ENCODE measurements at regions of chr20 and their contacts with region 1.

Region 1: DNA sequence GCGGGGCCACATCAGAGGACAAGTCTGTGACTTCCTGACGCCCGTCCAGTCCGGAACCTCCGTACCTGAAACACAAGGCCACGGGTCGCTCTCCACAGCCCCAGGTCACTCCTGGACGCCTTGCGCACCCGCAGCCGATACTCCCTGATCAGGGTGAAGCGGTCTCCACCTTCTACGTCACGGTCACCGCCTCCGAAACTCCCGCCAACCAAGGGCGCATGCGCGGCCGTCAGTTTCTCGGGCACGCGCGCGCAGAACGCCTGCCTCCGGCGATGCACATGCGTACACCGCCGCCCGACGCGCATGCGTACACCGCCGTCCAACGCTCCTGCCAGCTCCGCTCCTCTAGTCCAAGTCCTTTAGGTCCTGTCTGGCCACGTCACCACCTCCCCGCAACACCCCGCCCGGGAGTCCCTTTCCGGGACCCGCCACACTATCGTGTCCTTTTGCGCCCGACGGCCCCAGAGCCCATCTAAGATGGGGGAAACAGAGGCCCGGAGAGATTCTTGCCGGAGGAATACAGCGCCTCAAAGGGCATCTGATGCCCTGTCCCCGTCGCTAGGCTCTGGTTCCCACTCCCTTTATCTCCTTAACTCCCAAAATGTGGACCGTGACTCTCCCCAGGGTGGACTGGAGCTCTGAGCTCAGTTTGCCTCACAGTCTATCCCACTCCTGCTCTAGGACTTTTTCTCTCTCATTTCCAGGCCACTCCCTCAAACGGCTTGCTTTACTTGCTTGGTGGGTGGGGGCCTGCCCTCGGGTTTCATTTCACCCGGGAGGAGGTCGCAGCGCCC is at the start of gene DSN1:
- DNase-seq: peak; percentile 99
- ATAC-seq: peak; percentile 87
- H3K4me3 Mint-ChIP-seq: peak within 1 kb of the TSS; percentile 91
- H3K27ac Mint-ChIP-seq: peak within 1 kb of the TSS; percentile 94
- H3K4me1 Mint-ChIP-seq: peaks cover 35% of the 10 kb centered on the region
- H3K27me3 Mint-ChIP-seq: peaks cover 2% of the 10 kb centered on the region
- CTCF ChIP-seq: no peak
- total RNA-seq, gene DSN1: 11.2 and 14.0 TPM in 2 replicates

Region 2: GRCh38 chr20:36384022-36384619 is 389.7 kb before region 1 on chr20:
- CTCF ChIA-PET with region 1: no interaction called
- POLR2A ChIA-PET with region 1: no interaction called
- intact Hi-C with region 1: no loop called
- DNase-seq: no peak
- ATAC-seq: no peak
- H3K4me3 Mint-ChIP-seq: no peak overlapping the region
- H3K27ac Mint-ChIP-seq: no peak overlapping the region
- H3K4me1 Mint-ChIP-seq: no peaks in the 10 kb centered on the region
- H3K27me3 Mint-ChIP-seq: peaks cover 12% of the 10 kb centered on the region
- CTCF ChIP-seq: no peak

Region 3: DNA sequence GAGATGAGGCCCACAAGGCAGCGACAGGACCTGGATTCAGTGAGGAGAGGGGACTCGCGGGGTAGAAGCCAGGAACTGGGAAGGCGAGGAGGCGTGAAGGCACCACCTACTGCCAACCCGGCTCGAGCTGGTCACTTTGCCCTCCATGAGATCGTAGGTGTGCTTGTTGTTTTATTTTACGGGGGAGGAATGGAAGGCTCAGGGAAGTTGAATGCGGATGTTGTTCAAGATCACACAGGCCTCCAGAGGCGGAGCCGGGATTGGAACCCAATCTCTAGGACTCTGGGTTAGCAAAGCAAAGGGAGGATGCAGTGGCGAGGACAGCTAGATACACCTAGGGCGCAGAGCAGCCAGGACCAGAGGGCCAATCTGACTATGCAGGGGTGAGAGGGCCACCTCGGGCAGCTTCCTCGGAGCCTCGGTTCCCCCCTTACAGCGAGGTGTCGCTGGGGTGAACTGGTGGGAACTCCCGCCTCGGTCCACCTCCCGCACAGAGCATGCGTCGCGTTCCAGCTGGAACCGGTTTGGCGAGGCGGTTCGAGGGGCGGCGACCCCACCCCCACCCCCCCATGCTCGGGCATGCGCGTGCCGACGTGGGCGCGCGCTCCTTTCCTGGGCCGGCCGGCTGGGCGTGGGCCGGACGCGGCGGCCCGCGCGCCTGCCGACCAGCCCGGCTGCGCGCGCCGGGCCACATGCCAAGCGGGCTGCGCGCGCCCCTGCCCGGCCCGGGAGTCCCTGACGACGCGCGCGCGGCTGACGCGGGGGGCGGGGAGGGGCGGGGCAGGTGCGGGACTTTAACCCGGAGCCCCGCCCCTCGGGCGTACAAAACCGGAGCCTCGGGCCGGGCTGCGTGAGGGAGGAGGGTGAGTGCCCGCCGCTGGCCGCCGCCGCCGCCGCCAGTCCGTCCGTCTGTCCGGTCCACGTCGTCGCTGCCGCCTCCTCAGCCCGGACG is 312.9 kb before region 1 on chr20:
- CTCF ChIA-PET with region 1: no interaction called
- POLR2A ChIA-PET with region 1: interaction called, 4 read pairs
- intact Hi-C with region 1: loop called (anchors 1 kb)
- DNase-seq: peak; percentile 85
- ATAC-seq: peak; percentile 75
- H3K4me3 Mint-ChIP-seq: peak overlapping the region; percentile 74
- H3K27ac Mint-ChIP-seq: peak overlapping the region; percentile 91
- H3K4me1 Mint-ChIP-seq: peaks cover 46% of the 10 kb centered on the region
- H3K27me3 Mint-ChIP-seq: no peaks in the 10 kb centered on the region
- CTCF ChIP-seq: no peak

Region 4: DNA sequence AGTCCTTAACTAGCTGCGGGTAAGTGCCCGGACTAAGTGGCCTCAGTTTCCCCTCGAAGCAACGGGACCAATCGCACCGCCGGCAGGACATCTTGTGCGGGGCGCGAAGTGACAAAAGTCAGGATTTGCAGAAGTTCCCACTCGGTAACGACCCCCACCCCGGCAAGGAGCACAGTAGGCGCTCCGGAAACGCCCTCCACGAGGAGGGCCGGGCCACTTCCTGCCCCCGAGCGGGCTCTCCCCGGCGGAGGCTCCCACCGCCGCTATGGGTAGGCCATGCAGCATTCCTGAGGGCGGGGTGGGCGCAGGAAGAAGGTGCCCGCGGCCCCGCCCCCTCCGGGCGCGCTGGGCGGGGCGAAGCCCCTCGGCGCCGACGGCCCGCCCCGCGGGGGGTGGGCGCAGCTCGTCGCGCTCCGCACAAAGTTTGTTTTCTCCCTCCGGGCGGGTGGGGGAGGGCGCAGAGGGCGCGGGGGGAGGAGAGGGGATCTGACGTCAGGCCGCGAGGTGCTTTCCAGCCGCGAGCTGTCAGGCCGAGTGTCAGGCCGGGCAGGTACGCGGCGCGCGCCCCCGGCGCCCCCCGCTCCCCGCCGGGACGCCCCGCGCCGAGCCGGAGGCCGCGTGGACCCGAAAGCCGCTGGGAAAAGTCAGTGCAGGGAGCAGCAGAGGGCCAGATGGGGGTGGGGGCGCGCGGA is 200.5 kb before region 1 on chr20 and contains the start of gene TGIF2:
- CTCF ChIA-PET with region 1: no interaction called
- POLR2A ChIA-PET with region 1: no interaction called
- intact Hi-C with region 1: loop called (anchors 5 kb)
- DNase-seq: peak; percentile 92
- ATAC-seq: peak; percentile 77
- H3K4me3 Mint-ChIP-seq: peak within 1 kb of the TSS; percentile 90
- H3K27ac Mint-ChIP-seq: peak within 1 kb of the TSS; percentile 91
- H3K4me1 Mint-ChIP-seq: peaks cover 36% of the 10 kb centered on the region
- H3K27me3 Mint-ChIP-seq: no peaks in the 10 kb centered on the region
- CTCF ChIP-seq: no peak
- total RNA-seq, gene TGIF2: 40.8 and 43.8 TPM in 2 replicates

Region 5: DNA sequence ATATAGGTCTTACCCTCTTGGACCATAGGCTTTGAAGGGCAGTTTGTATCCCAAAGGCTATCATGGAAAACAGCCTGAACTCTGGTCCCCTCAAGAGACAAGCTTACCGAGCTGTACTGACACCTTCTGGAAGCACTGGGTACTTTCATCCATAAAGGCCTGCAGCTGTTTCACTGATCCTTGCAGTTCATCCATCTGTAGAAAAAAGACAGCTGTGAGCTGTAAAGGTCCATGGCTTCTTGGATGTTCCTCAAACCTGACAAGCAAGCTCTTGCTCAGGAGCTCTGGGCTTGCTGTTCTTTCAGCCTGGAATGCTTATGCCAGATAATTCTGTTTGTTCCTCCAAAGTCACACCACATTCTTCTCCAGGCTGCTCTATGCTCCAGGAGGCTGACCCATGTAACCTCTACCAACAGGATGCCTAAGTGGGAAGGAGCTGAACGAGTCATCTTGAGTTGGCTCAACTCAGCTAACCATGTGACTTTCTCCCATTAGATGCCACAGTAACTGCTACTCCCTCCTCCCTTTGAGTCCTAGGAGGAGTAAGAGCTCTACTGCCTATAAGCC is 19.1 kb before region 1 on chr20:
- CTCF ChIA-PET with region 1: interaction called, 11 read pairs
- POLR2A ChIA-PET with region 1: interaction called, 8 read pairs
- intact Hi-C with region 1: loop called (anchors 1 kb)
- DNase-seq: no peak
- ATAC-seq: peak; percentile 60
- H3K4me3 Mint-ChIP-seq: no peak overlapping the region
- H3K27ac Mint-ChIP-seq: peak overlapping the region; percentile 61
- H3K4me1 Mint-ChIP-seq: peaks cover 33% of the 10 kb centered on the region
- H3K27me3 Mint-ChIP-seq: no peaks in the 10 kb centered on the region
- CTCF ChIP-seq: no peak

Region 6: GRCh38 chr20:36819659-36820058 is 45.9 kb after region 1 on chr20:
- CTCF ChIA-PET with region 1: no interaction called
- POLR2A ChIA-PET with region 1: no interaction called
- intact Hi-C with region 1: no loop called
- DNase-seq: no peak
- ATAC-seq: no peak
- H3K4me3 Mint-ChIP-seq: no peak overlapping the region
- H3K27ac Mint-ChIP-seq: no peak overlapping the region
- H3K4me1 Mint-ChIP-seq: no peaks in the 10 kb centered on the region
- H3K27me3 Mint-ChIP-seq: no peaks in the 10 kb centered on the region
- CTCF ChIP-seq: no peak

Region 7: DNA sequence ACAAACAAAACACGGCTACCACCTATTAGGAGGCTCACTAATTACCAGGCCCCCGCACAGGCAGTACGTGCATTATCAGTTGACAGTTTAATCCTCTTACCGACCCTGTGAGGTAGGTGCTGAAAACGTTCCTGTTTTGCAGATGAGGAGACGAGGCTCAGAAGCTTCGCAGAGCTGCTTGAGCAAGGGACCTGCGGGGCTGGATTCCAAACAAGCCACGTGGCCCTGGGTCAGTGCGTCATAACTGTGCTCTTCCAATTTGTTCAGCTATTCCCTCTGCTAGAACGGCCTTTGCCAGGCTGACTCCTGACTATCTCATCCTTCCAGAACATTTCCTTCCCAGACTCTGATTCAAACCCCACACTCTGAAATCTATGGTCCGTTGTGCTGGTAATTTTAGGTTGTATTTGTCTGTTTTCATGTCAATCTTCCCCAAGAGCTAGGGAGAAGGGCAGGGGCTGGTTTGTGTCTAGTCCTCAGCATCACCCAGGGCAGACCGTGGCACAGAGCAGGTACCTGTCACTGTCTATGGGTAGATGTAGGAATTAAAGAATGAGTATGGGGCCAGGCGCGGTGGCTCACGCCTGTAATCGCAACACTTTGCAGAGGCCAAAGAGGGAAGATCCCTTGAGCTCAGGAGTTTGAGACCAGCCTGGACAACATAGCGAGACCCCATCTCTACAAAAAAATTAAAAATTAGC is 73.4 kb after region 1 on chr20:
- CTCF ChIA-PET with region 1: no interaction called
- POLR2A ChIA-PET with region 1: interaction called, 9 read pairs
- intact Hi-C with region 1: loop called (anchors 2 kb)
- DNase-seq: no peak
- ATAC-seq: no peak
- H3K4me3 Mint-ChIP-seq: peak overlapping the region; percentile 74
- H3K27ac Mint-ChIP-seq: peak overlapping the region; percentile 95
- H3K4me1 Mint-ChIP-seq: peaks cover 91% of the 10 kb centered on the region
- H3K27me3 Mint-ChIP-seq: no peaks in the 10 kb centered on the region
- CTCF ChIP-seq: no peak

Measured in activated B cell treated with CpG ODN at 0.5 μM for 24 hours (primary cell).